Prostate gland (tissue), 2 donors: ENCODE measurements at regions of chr16 and their contacts with region 1.

Region 1: GRCh38 chr16:79229361-79229760 is 371.2 kb downstream of the MAF start:
- DNase-seq: no peak
- H3K4me3 ChIP-seq: peak overlapping the region in 1 of 2 donors; percentile 15
- H3K27ac ChIP-seq: peak overlapping the region in 1 of 2 donors; percentile 22
- H3K4me1 ChIP-seq: no peaks in the 10 kb centered on the region
- H3K27me3 ChIP-seq: no peaks in the 10 kb centered on the region
- CTCF ChIP-seq: no peak
- POLR2A ChIP-seq: no peak

Region 2: DNA sequence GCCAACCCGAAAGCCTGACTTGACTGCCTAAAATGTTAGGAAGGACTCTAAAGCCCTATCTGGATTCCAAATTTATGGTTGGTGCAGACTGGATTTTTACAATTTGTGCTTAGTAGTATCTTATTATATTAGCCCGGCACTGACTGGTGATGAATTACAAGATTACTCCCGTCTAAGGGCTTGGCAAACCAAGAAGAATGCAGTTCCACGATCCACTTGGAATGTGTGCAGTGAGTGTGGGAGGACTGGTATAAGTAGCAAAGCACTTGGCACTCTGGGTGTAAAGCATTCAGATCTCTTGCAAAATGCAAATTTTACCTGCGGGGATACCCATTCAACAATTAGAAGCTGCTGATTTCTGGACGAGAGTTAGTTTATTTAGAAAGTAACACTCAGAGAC is 168.2 kb before region 1 on chr16:
- intact Hi-C with region 1: no loop called
- DNase-seq: no peak
- H3K4me3 ChIP-seq: no peak overlapping the region
- H3K27ac ChIP-seq: no peak overlapping the region
- H3K4me1 ChIP-seq: no peaks in the 10 kb centered on the region
- H3K27me3 ChIP-seq: no peaks in the 10 kb centered on the region
- CTCF ChIP-seq: no peak
- POLR2A ChIP-seq: no peak

Region 3: GRCh38 chr16:79071424-79071823 is 157.9 kb before region 1 on chr16:
- intact Hi-C with region 1: loop called (anchors 10 kb)
- DNase-seq: peak; percentile 82
- H3K4me3 ChIP-seq: no peak overlapping the region
- H3K27ac ChIP-seq: peak overlapping the region; percentile 7 to 20
- H3K4me1 ChIP-seq: no peaks in the 10 kb centered on the region
- H3K27me3 ChIP-seq: no peaks in the 10 kb centered on the region
- CTCF ChIP-seq: no peak
- POLR2A ChIP-seq: no peak